Activated CD4-positive, alpha-beta T cell treated with anti-CD3 and anti-CD28 coated beads, Interleukin-2, amount 10 ng/mL, durations not matched to agents 7 days and 5 days (primary cell): ENCODE measurements at regions of chr19 and their contacts with region 1.

Region 1: GRCh38 chr19:55667958-55668357 is 7.1 kb upstream of the EPN1 start:
- DNase-seq: no peak
- H3K4me3 Mint-ChIP-seq: no peak overlapping the region
- H3K27ac Mint-ChIP-seq: peak overlapping the region; percentile 25
- H3K4me1 Mint-ChIP-seq: peaks cover 8% of the 10 kb centered on the region
- H3K27me3 Mint-ChIP-seq: no peaks in the 10 kb centered on the region

Region 2: GRCh38 chr19:55494172-55494761 is 173.7 kb before region 1 on chr19:
- CTCF ChIA-PET with region 1: no interaction called
- POLR2A ChIA-PET with region 1: no interaction called
- DNase-seq: no peak
- H3K4me3 Mint-ChIP-seq: no peak overlapping the region
- H3K27ac Mint-ChIP-seq: no peak overlapping the region
- H3K4me1 Mint-ChIP-seq: no peaks in the 10 kb centered on the region
- H3K27me3 Mint-ChIP-seq: peaks cover 2% of the 10 kb centered on the region

Region 3: GRCh38 chr19:55653758-55654539 is 14.0 kb before region 1 on chr19:
- CTCF ChIA-PET with region 1: interaction called, 11 read pairs
- POLR2A ChIA-PET with region 1: interaction called, 3 read pairs
- DNase-seq: peak; percentile 100
- H3K4me3 Mint-ChIP-seq: peak overlapping the region; percentile 88
- H3K27ac Mint-ChIP-seq: peak overlapping the region; percentile 99
- H3K4me1 Mint-ChIP-seq: peaks cover 44% of the 10 kb centered on the region
- H3K27me3 Mint-ChIP-seq: no peaks in the 10 kb centered on the region

Region 4: DNA sequence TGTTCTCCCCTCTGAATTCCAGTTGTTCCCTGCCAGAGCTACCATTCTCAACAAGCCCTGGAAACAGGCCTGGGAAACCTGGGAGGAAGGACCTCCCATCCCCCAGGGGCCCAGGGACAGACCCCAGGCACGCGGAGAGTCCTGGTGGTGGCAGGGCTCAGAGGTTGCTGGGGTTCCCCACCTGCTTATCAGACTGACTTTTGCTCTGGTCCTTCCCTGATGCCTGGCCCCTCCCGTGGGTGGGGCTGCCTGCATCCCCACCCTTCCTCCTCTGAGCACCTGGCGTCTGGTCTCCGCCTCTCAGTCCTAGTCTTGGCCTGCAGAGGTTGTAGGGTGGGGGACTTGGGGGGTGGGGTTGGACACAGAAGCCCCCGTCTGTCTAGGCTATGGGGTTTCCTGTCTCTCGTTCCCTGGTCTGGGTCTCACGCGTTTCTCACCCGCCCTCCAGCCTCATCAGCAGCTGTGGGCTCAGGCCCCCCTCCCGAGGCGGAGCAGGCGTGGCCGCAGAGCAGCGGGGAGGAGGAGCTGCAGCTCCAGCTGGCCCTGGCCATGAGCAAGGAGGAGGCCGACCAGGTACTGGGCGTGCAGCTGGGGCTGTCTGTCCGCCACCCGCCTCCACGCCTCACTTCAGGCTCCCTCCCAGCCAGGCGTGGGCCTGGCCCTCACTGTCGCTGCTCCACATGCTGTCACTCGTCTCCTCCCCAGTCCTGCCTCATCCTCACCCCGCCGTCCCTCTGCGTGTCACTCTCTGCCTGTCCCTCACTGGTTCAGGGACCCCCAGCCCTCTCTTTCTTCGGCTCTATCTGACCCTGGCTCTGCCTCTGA is 20.7 kb after region 1 on chr19:
- CTCF ChIA-PET with region 1: no interaction called
- POLR2A ChIA-PET with region 1: no interaction called
- DNase-seq: no peak
- H3K4me3 Mint-ChIP-seq: no peak overlapping the region
- H3K27ac Mint-ChIP-seq: peak overlapping the region; percentile 41
- H3K4me1 Mint-ChIP-seq: peaks cover 3% of the 10 kb centered on the region
- H3K27me3 Mint-ChIP-seq: no peaks in the 10 kb centered on the region